HepG2 (cell line): ENCODE measurements at regions of chr22 and their contacts with region 1.

Region 1: DNA sequence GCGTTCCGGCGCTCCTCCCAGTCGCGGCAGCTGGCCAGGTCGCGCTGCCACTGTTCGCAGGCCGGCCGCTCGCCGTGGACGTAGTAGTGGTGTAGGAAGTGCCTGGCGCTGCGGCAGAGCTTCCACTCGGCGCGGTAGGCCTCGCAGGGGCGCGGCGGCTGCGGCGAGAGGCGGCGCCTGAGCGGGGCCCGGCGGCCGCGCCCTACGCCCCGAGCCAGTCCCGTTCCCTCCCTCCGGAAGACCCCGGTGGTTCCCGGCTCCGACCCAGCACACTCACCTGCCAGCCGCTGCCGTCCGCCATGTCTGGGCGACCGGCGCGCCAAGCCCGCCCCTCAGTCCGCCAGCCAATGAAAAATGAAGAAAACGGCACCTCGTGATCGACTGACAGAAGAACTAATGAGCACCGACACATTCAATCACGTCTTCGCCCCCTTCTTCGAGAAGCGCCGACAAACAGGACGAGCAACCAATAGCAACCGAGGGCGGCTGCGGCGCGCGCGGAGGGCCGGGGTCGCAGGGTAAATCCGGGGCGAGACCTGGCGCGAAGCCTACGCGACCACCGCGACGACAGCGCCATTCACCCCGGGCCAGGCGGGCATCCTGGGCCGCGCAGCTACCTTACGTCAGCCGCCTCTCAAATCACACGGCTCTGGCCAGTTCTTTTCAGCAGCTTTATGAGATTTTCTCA is at the start of gene C22orf39:
- DNase-seq: peak; percentile 93
- ATAC-seq: peak; percentile 90
- H3K4me3 ChIP-seq: peak within 1 kb of the TSS; percentile 70 to 86 (median 81)
- H3K27ac ChIP-seq: peak within 1 kb of the TSS; percentile 84
- H3K4me1 ChIP-seq: peaks cover 40% of the 10 kb centered on the region
- H3K27me3 ChIP-seq: no peaks in the 10 kb centered on the region; a peak in 1 of 5 replicates
- CTCF ChIP-seq: no peak
- EP300 ChIP-seq: no peak
- POLR2A ChIP-seq: peak; percentile 55 to 87; a peak in 3 of 4 replicates
- RAD21 ChIP-seq: peak; percentile 55; the same call in 1 of the 2 replicates
- total RNA-seq, gene C22orf39: 26.4 and 31.5 TPM in 2 replicates

Region 2: GRCh38 chr22:19357270-19358105 is 90.0 kb before region 1 on chr22:
- CTCF ChIA-PET with region 1: no interaction called
- POLR2A ChIA-PET with region 1: no interaction called
- in situ Hi-C with region 1: no loop called
- intact Hi-C with region 1: no loop called
- DNase-seq: no peak
- ATAC-seq: no peak
- H3K4me3 ChIP-seq: no peak overlapping the region
- H3K27ac ChIP-seq: no peak overlapping the region
- H3K4me1 ChIP-seq: no peaks in the 10 kb centered on the region
- H3K27me3 ChIP-seq: no peaks in the 10 kb centered on the region
- CTCF ChIP-seq: no peak
- EP300 ChIP-seq: no peak
- POLR2A ChIP-seq: no peak
- RAD21 ChIP-seq: no peak

Region 3: DNA sequence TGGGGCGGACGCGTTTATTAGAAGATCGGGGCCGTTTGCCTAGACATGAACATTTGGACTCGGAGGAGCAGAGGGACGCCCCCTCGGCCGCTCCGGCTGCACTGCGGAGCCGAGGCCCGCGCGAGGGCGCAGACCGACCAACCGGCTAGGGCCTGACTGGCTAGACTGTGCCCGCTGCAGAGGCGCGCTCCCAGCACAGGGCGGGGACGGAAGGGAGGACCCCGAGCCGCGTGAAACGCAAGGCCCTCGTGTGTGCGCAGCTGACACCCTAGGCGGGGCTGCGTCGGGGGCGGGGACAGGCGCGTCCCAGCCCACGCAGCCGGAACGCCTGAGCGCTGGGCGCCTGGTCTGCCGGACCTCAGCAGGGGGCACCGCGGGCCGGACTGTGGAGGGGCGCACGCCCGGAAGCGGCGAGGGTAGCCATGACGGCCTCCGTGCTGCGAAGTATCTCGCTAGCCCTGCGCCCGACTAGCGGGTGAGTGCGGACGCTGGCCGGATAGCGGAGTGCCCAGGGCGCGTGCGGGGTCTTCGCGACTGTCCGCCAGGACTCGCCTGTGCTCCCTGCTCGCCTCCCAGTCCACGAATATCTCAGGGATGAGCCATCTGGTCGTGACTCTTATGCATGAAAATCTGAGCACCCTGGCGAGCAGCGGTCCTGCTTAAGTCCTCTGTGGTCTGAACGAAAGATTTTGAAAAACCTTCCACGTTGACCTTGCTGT is 15.2 kb before region 1 on chr22 and contains the start of gene MRPL40:
- CTCF ChIA-PET with region 1: no interaction called
- POLR2A ChIA-PET with region 1: interaction called, 23 read pairs
- in situ Hi-C with region 1: no loop called
- intact Hi-C with region 1: loop called (anchors 2 kb)
- DNase-seq: peak; percentile 86
- ATAC-seq: peak; percentile 92
- H3K4me3 ChIP-seq: peak within 1 kb of the TSS; percentile 86 to 91 (median 88)
- H3K27ac ChIP-seq: peak within 1 kb of the TSS; percentile 97
- H3K4me1 ChIP-seq: peaks cover 38% of the 10 kb centered on the region
- H3K27me3 ChIP-seq: no peaks in the 10 kb centered on the region; a peak in 1 of 5 replicates
- CTCF ChIP-seq: peak; percentile 49
- EP300 ChIP-seq: peak; percentile 39 to 62; a peak in 1 of 4 replicates
- POLR2A ChIP-seq: peak; percentile 93 to 96
- RAD21 ChIP-seq: peak; percentile 69
- total RNA-seq, gene MRPL40: 79.7 and 107 TPM in 2 replicates

Region 4: DNA sequence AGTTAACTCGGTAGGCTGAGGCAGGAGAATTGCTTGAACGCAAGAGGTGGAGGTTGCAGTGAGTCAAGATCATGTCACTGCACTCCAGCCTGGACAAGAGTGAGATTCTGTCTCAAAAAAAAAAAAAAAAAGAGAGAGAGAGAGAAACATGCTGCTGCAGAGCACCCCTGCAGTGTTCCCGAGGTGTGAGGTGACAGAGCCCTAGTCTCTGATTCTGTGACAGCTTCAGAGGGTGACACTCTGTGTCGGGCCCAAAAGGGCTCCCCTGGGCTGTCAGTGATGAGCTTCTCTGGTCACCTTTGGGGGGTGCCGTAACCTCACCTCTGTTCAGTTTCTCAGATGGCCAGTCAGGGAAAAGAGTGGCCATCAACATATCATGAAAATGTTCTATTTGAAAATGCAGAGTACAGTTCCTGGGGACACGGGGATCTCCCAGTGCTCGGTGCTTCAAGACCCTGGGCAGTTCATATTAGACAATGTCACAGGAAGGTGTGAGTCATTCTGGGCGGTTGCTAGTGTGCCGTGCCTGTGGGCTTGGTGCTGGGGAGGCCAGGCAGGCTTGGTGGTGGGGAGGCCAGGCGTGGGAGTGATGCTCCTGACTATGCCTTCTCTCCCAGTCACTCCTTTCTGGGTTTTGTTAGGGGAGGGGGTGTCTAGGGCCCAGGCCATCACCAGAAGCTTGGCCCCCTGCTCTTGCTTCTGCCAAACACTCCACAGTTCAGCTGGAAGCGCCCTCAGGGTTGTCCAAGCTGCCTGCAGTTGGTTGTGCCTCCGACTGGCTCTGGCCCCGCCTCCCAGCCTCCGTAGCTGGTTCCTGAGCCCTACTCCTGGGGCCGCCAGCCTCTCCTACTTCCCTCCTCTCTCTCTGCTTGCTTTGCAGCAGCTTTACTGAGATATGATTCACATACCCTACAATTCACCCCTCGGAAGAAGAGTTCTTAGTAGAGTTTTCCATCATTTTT is 129.2 kb after region 1 on chr22:
- CTCF ChIA-PET with region 1: no interaction called
- POLR2A ChIA-PET with region 1: no interaction called
- in situ Hi-C with region 1: no loop called
- intact Hi-C with region 1: no loop called
- DNase-seq: no peak
- ATAC-seq: peak; percentile 60; the same call in 2 of the 3 replicates
- H3K4me3 ChIP-seq: no peak overlapping the region
- H3K27ac ChIP-seq: no peak overlapping the region
- H3K4me1 ChIP-seq: no peaks in the 10 kb centered on the region
- H3K27me3 ChIP-seq: peaks cover 2 to 46% of the 10 kb centered on the region in 2 experiments; a peak in 4 of 5 replicates
- CTCF ChIP-seq: 0 out of 2 replicates have a peak, but pooled peaks have one; percentile 22
- EP300 ChIP-seq: no peak
- POLR2A ChIP-seq: no peak
- RAD21 ChIP-seq: no peak